Activated CD8-positive, alpha-beta T cell treated with anti-CD3 and anti-CD28 coated beads, Interleukin-2, amount 10 ng/mL, durations not matched to agents 7 days and 5 days (primary cell): ENCODE measurements at regions of chr7 and their contacts with region 1.

Region 1: GRCh38 chr7:7968543-7969305 is at the start of gene GLCCI1:
- DNase-seq: peak; percentile 97
- ATAC-seq: peak; percentile 95
- H3K4me3 Mint-ChIP-seq: peak within 1 kb of the TSS; percentile 79
- H3K27ac Mint-ChIP-seq: peak within 1 kb of the TSS; percentile 85
- H3K4me1 Mint-ChIP-seq: peaks cover 19% of the 10 kb centered on the region
- H3K27me3 Mint-ChIP-seq: no peaks in the 10 kb centered on the region
- total RNA-seq, gene GLCCI1: 17.5 to 17.7 TPM

Region 2: DNA sequence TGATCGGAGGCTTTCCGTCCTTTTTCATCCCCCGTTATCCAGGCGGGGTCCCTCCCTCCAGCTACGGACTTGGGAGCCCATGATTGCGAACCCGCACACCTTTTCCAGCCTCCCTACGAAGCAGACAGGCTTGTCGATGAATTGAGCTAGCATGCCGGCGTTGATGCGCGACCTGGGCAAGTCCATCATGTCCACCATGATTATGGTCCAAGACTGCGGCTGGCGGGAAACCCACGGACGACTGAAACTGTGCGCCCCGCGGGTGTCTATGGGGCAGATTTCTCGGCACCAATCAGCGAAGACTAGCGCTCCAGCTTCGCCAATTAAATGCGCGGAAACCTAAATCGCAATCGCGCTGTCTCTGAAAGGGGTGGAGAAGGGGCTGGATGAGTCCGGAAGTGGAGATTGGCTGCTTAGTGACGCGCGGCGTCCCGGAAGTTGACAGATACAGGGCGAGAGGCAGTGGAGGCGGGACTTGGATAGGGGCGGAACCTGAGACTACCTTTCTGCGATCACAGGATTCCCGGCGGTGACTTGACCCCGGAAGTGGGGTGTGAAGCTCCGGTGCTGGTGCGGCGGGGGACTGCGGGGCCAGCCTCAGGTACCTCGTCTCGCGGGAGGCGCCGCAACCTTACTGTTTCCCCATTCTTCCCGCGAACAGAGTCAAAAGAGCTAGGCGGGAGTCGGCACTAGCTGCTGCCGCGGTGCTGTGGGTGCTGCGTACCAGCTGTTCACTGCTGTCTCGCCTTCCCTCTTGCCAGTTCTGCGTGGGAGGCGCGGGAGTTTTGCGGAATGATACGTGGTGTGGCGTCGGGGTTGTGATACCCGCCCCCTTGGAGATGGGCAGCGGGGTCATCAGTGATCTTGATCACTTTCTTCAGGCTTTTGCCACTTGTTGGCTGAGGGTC is 328.2 kb before region 1 on chr7 and contains the start of gene UMAD1:
- CTCF ChIA-PET with region 1: no interaction called
- POLR2A ChIA-PET with region 1: interaction called, 19 read pairs
- DNase-seq: peak; percentile 99
- ATAC-seq: peak; percentile 96
- H3K4me3 Mint-ChIP-seq: peak within 1 kb of the TSS; percentile 86
- H3K27ac Mint-ChIP-seq: peak within 1 kb of the TSS; percentile 97
- H3K4me1 Mint-ChIP-seq: peaks cover 33% of the 10 kb centered on the region
- H3K27me3 Mint-ChIP-seq: no peaks in the 10 kb centered on the region
- total RNA-seq, gene UMAD1: 11.9 to 12.3 TPM

Region 3: GRCh38 chr7:7944619-7945282 is 24.0 kb before region 1 on chr7:
- CTCF ChIA-PET with region 1: interaction called, 16 read pairs
- POLR2A ChIA-PET with region 1: interaction called, 15 read pairs
- DNase-seq: peak; percentile 76
- ATAC-seq: peak; percentile 95
- H3K4me3 Mint-ChIP-seq: peak overlapping the region; percentile 63
- H3K27ac Mint-ChIP-seq: peak overlapping the region; percentile 94
- H3K4me1 Mint-ChIP-seq: peaks cover 31% of the 10 kb centered on the region
- H3K27me3 Mint-ChIP-seq: no peaks in the 10 kb centered on the region

Region 4: GRCh38 chr7:8015100-8015748 is 46.5 kb after region 1 on chr7:
- CTCF ChIA-PET with region 1: no interaction called
- POLR2A ChIA-PET with region 1: no interaction called
- DNase-seq: no peak
- ATAC-seq: peak; percentile 76
- H3K4me3 Mint-ChIP-seq: no peak overlapping the region
- H3K27ac Mint-ChIP-seq: peak overlapping the region; percentile 61
- H3K4me1 Mint-ChIP-seq: peaks cover 13% of the 10 kb centered on the region
- H3K27me3 Mint-ChIP-seq: no peaks in the 10 kb centered on the region

Region 5: DNA sequence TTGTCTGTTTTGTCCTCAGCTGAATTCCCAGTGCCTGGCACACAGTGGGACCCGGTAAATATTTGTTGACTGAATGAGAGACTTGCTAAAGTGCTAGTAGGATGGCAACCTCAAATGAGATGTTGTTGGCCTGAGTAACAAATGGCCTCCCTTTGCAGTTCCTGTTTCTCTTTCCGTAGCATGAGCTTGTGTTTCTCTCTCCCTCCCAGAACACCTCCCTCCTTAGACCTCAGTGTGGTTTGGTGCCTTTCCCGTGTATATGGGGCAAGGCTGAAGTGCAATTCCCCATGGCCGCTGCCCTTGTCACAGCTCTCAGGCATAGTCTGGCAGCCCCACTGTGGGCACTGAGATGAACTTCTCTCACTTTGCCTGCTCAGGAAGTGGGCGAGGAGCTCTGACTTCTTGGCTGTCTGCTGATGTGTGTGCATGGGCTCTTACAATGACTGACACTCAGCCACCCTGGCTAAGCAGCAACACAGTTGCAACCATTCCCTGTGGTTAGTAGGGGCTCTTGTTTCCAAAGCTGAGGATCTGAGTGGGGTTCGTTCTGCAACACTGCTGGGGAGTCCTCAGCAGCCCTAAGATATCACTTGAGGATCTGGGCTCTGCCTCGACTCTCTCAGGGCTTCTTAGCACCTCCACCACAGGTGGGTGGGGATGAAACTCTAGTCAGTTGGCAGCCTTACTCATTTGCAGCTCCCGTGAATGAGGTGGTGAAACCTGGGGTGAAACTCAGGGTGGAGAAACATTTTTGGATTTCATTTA is 157.1 kb after region 1 on chr7:
- CTCF ChIA-PET with region 1: interaction called, 3 read pairs
- POLR2A ChIA-PET with region 1: interaction called, 16 read pairs
- DNase-seq: peak; percentile 85
- ATAC-seq: peak; percentile 96
- H3K4me3 Mint-ChIP-seq: peak overlapping the region; percentile 57
- H3K27ac Mint-ChIP-seq: peak overlapping the region; percentile 99
- H3K4me1 Mint-ChIP-seq: peaks cover 76% of the 10 kb centered on the region
- H3K27me3 Mint-ChIP-seq: peaks cover 2% of the 10 kb centered on the region

Region 6: GRCh38 chr7:8176370-8177081 is 207.8 kb after region 1 on chr7:
- CTCF ChIA-PET with region 1: interaction called, 3 read pairs
- POLR2A ChIA-PET with region 1: interaction called, 24 read pairs
- DNase-seq: peak; percentile 85
- ATAC-seq: peak; percentile 96
- H3K4me3 Mint-ChIP-seq: peak overlapping the region; percentile 68
- H3K27ac Mint-ChIP-seq: peak overlapping the region; percentile 99
- H3K4me1 Mint-ChIP-seq: peaks cover 50% of the 10 kb centered on the region
- H3K27me3 Mint-ChIP-seq: no peaks in the 10 kb centered on the region

Region 7: GRCh38 chr7:8190119-8190895 is 221.6 kb after region 1 on chr7:
- CTCF ChIA-PET with region 1: interaction called, 57 read pairs
- POLR2A ChIA-PET with region 1: interaction called, 6 read pairs
- DNase-seq: peak; percentile 79
- ATAC-seq: peak; percentile 88
- H3K4me3 Mint-ChIP-seq: no peak overlapping the region
- H3K27ac Mint-ChIP-seq: no peak overlapping the region
- H3K4me1 Mint-ChIP-seq: peaks cover 31% of the 10 kb centered on the region
- H3K27me3 Mint-ChIP-seq: peaks cover 14% of the 10 kb centered on the region

Region 8: DNA sequence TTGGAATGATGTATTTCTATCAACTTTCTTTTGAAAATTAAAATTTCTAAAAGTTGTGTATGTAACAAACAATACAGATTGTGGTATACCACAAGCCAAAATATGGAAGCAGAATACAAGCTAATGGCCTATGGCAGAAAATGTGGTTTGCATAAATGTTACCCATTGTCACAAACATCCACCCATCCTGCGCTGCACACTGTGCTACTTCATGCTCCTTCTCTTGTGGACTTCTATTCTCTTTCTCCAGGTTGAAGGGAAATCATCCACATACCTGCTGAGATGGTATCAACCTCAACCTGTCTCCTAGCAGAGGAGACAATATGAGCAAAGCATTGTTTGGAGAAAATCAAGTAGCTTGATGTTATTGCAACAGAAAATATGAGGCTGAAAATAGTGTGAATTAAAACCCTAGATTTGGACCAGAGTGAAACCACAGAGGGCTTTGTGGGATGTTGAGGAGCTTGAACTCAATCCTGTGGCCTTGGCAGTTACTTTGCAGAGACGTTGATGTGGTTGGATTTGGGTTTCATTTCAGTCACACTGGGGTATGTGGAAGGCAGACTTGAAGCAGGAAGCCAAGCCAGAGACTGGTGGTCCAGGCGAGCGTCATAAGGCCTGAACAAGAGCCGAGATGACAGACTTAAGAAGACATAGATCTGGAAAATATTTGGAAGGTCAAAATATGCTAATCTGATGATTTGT is 229.4 kb after region 1 on chr7:
- CTCF ChIA-PET with region 1: interaction called, 12 read pairs
- POLR2A ChIA-PET with region 1: interaction called, 8 read pairs
- DNase-seq: peak; percentile 88
- ATAC-seq: peak; percentile 95
- H3K4me3 Mint-ChIP-seq: peak overlapping the region; percentile 0
- H3K27ac Mint-ChIP-seq: peak overlapping the region; percentile 4
- H3K4me1 Mint-ChIP-seq: peaks cover 54% of the 10 kb centered on the region
- H3K27me3 Mint-ChIP-seq: peaks cover 46% of the 10 kb centered on the region

Region 9: GRCh38 chr7:8325063-8325462 is 356.3 kb after region 1 on chr7:
- CTCF ChIA-PET with region 1: no interaction called
- POLR2A ChIA-PET with region 1: no interaction called
- DNase-seq: no peak
- ATAC-seq: no peak
- H3K4me3 Mint-ChIP-seq: no peak overlapping the region
- H3K27ac Mint-ChIP-seq: no peak overlapping the region
- H3K4me1 Mint-ChIP-seq: no peaks in the 10 kb centered on the region
- H3K27me3 Mint-ChIP-seq: peaks cover 5% of the 10 kb centered on the region